HEK293 (cell line): ENCODE measurements at regions of chrX and their contacts with region 1.

Region 1: GRCh38 chrX:33434256-33435092 is 223.1 kb upstream of the DMD start:
- H3K4me3 ChIP-seq: no peak overlapping the region
- H3K27ac ChIP-seq: no peak overlapping the region
- H3K4me1 ChIP-seq: no peaks in the 10 kb centered on the region
- CTCF ChIP-seq: peak; percentile 38; the same call in 1 of the 2 replicates

Region 2: DNA sequence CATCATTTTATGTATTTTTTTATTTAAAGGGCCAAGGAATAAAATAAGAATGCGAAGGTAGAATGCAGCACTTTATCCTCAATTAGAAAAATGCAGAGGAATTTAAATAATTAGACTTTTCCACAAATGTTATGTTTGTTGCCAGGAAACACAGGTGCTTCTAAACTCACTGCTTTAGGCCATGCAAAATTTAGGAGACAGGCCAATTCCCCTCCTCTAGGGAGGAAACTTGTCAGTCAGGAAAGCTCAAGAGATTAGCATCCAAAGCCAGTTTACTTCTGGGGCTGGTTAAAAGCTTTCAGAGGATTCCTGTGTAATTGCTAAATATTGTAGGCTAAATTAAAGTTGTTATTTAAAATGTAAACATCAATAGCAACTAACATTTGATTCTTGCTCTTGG is 347.6 kb before region 1 on chrX:
- CTCF ChIA-PET with region 1: no interaction called
- POLR2A ChIA-PET with region 1: no interaction called
- H3K4me3 ChIP-seq: no peak overlapping the region
- H3K27ac ChIP-seq: no peak overlapping the region
- H3K4me1 ChIP-seq: no peaks in the 10 kb centered on the region
- CTCF ChIP-seq: no peak

Region 3: DNA sequence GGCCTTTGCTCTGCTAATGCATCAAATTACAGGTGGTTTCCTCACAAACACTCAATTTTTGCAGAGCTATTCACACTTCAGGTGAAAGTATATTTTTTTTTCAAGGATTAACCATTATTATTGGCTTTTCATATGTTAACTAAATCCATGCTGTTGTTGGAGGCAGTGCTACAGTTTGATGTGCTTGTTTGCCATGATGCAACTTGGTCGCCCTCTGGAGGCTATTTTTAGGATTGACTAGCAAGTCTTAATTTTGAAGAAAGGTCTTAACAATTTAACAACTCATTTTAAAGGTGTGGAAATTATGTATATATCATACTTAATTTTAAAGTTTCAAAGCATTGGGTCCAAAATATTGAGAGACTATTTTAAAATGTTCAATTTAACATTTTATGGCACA is 866.4 kb after region 1 on chrX:
- CTCF ChIA-PET with region 1: interaction called, 42 read pairs
- POLR2A ChIA-PET with region 1: no interaction called
- H3K4me3 ChIP-seq: no peak overlapping the region
- H3K27ac ChIP-seq: no peak overlapping the region
- H3K4me1 ChIP-seq: no peaks in the 10 kb centered on the region
- CTCF ChIP-seq: peak; percentile 37; the same call in 1 of the 2 replicates